Ascending aorta (tissue), 2 donors: ENCODE measurements at regions of chr18 and their contacts with region 1.

Region 1: GRCh38 chr18:56638271-56639093 is at the start of gene TXNL1:
- DNase-seq: peak; percentile 95 to 99
- H3K4me3 ChIP-seq: peak within 1 kb of the TSS; percentile 78 to 81
- H3K27ac ChIP-seq: peak within 1 kb of the TSS; percentile 97 to 98
- H3K4me1 ChIP-seq: peaks cover 0 to 5% of the 10 kb centered on the region in 2 donors
- H3K27me3 ChIP-seq: no peaks in the 10 kb centered on the region
- CTCF ChIP-seq: no peak
- total RNA-seq, gene TXNL1: 12.3 TPM

Region 2: DNA sequence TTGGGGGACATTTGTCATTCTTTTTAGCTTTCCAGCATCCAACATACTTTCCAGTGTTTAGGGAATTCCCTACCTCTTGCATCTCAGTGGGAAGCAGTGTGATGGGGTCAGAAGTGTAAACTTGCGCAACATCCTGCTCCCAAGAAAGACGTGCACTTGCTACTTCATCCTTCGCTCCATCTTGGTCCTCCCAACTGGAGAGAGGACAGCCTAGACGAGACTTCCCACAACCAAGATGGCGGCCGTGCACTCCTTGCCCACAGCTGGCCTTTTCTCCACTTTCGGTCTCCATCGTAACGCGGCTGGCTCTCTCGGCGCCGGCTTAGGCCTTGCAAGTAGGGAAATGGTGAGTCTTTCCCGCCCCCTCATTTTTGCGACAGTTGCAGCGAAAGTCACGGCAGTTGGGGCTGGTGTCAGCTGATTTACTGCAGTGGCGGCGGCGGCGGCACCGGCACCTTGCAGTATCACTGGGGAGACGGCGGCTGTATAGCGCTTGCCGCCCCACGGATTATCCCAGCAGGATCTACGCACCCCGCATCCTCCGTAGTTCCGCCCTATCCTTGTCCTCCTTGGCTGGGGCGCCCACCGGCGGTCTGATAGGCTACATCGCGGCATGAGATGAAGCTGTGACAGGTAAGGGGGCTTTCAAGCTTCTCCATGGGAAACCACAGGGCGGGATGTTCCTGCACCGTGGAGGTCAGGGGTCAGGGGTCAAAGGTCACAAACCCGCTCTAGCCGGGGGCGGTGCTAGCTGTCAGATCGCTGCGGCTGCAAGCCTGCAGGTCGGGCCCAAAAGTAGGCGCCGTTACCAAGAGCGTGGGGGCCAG is 12.7 kb after region 1 on chr18 and contains the start of gene WDR7:
- intact Hi-C with region 1: loop called (anchors 1 kb)
- DNase-seq: peak; percentile 96 to 99
- H3K4me3 ChIP-seq: peak within 1 kb of the TSS; percentile 80 to 94
- H3K27ac ChIP-seq: peak within 1 kb of the TSS; percentile 87
- H3K4me1 ChIP-seq: peaks cover 7 to 13% of the 10 kb centered on the region in 2 donors
- H3K27me3 ChIP-seq: no peaks in the 10 kb centered on the region
- CTCF ChIP-seq: no peak
- total RNA-seq, gene WDR7: 13.5 TPM

Region 3: GRCh38 chr18:56672391-56672790 is 33.9 kb after region 1 on chr18:
- intact Hi-C with region 1: no loop called
- DNase-seq: no peak
- H3K4me3 ChIP-seq: no peak overlapping the region
- H3K27ac ChIP-seq: no peak overlapping the region
- H3K4me1 ChIP-seq: no peaks in the 10 kb centered on the region
- H3K27me3 ChIP-seq: no peaks in the 10 kb centered on the region
- CTCF ChIP-seq: no peak